ENCODE measurements at regions of chr5 and their contacts with region 1.

Region 1: DNA sequence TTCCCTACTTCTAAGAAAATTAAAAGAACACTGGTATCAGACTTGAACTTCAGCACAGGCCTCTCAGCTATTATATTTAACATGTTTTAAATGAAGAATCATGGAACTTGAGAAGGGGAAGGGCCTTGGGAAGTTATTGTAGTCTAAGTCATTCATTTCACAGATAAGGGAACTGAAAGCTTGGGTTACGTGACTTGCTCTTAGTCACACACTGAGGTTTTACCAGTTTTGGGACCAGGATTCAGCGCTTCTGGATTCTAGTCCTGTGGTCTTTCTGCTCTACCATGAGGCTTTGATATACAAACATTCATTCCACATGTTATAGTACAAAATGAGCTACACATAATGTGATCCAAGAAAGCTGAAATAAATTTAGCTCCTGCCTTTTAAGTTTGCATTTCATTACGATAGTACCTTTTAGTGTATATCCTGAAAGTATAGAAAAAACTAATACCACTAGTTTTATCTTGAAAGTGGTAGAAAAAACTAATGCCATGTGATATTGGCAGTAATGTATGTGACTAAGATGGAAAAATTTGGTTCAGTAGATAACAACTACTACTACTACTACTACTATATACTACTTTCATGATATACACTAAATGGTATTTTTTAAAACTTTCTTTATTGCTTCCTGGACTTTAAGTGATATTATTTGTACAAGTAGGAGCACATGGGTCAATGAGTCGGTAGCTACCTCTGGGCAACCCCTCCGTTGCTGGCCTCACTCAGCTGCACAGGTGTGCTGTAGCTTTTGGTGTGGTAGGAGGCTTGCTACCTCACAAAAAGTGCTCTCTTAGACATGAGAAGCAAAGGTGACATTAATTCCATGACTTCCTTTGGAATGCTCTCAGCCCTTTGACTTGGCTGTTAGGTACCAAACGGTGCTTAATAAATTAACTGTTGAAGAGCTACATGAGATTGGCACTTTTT is 40.7 kb downstream of the F2RL2 start:
- DNase-seq: peak; percentile 45
- CTCF ChIP-seq: no peak

Region 2: GRCh38 chr5:76402886-76403765 is 179.4 kb before region 1 on chr5 and contains the start of gene IQGAP2:
- CTCF ChIA-PET with region 1: interaction called, 28 read pairs
- POLR2A ChIA-PET with region 1: no interaction called
- DNase-seq: peak; percentile 88
- CTCF ChIP-seq: peak; percentile 96

Region 3: DNA sequence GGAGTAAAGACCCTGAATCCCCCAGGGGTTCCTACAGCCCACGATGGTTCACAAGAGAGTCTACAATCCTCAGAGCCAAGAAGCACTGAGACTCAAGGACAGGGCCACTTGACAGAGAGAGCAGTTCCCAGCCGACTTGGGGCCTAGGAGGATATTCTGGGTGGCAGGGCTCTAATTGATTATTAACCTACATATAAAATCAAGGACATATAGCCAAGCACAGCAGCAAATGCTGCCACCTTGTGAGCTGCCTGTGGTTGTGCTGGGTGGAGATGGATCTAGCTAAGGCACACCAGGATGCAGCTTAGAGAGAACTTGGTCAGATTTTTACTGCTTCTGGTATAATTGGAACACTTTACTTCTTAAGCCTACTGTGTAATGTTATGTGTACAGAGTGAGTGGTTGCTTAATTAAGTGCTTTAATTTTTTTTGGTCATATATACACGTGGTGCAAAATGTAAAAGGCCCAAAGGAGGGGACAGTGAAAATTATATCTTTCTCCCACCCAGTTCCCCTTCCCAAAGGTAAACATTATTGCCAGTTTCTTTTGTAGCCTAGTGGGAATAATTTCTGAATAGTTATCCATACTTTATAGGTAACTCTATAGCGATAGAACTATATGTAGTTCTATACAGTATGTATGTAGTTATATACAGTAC is 38.1 kb before region 1 on chr5:
- CTCF ChIA-PET with region 1: interaction called, 19 read pairs
- POLR2A ChIA-PET with region 1: no interaction called
- DNase-seq: peak; percentile 43
- CTCF ChIP-seq: peak; percentile 78

Region 4: DNA sequence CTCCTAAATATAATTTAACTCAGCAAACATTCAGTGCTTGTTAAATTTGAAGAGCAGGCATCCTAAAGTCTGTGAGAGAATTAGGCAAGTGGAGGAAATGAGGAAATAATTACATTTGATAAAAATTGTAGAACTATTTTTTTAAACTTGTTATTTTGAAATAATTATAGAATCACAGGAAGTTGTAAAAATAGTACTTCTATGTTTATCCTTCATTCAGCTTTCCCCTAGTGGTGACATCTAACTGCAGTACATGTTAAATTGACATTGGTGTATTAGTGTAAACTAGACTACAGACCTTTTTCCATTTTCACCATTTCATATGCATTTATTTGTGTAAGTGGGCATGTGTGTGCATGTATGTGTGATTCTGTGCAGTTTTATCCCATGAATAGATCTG is 10.9 kb before region 1 on chr5:
- CTCF ChIA-PET with region 1: interaction called, 32 read pairs
- POLR2A ChIA-PET with region 1: no interaction called
- DNase-seq: no peak
- CTCF ChIP-seq: peak; percentile 19